Naive thymus-derived CD8-positive, alpha-beta T cell (primary cell): ENCODE measurements at regions of chr2 and their contacts with region 1.

Region 1: DNA sequence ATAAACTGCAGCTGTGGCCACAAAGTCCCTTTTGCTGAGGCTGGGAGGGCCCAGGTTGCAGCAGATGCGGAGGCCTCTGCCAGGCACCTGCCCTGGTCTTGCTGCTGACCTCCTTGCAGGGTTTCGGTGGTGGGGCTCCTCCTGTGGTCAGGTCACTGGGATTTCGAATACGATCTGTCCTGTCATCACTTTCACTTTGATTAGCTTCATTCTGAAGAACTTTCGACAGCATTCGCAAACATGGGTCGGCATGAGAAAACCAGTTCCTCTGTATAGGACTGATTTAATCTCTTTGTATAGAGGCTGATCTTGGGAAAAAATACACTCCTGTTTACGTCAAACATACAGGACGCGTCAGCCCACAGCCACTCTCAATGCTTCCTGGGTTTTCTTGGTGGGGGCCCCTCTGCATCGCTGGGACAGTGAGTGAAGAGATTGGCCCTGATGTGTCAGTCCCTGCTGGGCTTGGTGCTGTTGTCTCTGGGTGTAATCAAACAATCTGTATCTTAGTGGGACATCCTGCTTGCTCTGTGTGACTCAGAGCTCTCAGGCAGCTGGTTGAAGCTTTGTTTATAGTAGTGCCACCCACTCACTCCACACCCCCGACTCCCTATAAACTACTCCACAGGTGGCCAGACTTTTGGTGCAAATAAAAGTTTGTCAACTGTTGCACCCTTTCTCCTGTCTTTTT is 209.4 kb upstream of the CXCR4 start:
- DNase-seq: peak; percentile 48 to 90 (median 82)
- ATAC-seq: peak; percentile 92 to 94
- H3K4me3 Mint-ChIP-seq: peak overlapping the region; percentile 69 to 86 (median 82)
- H3K27ac Mint-ChIP-seq: peak overlapping the region; percentile 94 to 100 (median 97)
- H3K4me1 Mint-ChIP-seq: peaks cover 36 to 76% (median 68%) of the 10 kb centered on the region in 4 donors
- H3K27me3 Mint-ChIP-seq: no peaks in the 10 kb centered on the region

Region 2: GRCh38 chr2:136107051-136108033 is 220.0 kb before region 1 on chr2:
- POLR2A ChIA-PET with region 1: no interaction called
- DNase-seq: no peak
- ATAC-seq: no peak
- H3K4me3 Mint-ChIP-seq: no peak overlapping the region
- H3K27ac Mint-ChIP-seq: peak overlapping the region in 4 of 10 donors; percentile 2 to 61 (median 32)
- H3K4me1 Mint-ChIP-seq: peaks cover 7 to 59% (median 12%) of the 10 kb centered on the region in 4 donors
- H3K27me3 Mint-ChIP-seq: no peaks in the 10 kb centered on the region

Region 3: GRCh38 chr2:136281281-136282114 is 45.8 kb before region 1 on chr2:
- POLR2A ChIA-PET with region 1: interaction called, 11 read pairs
- DNase-seq: peak; percentile 28 to 76 (median 64)
- ATAC-seq: peak; percentile 87 to 88
- H3K4me3 Mint-ChIP-seq: peak overlapping the region; percentile 48 to 75 (median 60)
- H3K27ac Mint-ChIP-seq: peak overlapping the region; percentile 86 to 98 (median 95)
- H3K4me1 Mint-ChIP-seq: peaks cover 28 to 74% (median 56%) of the 10 kb centered on the region in 4 donors
- H3K27me3 Mint-ChIP-seq: no peaks in the 10 kb centered on the region

Region 4: GRCh38 chr2:136362676-136363390 is 35.5 kb after region 1 on chr2:
- POLR2A ChIA-PET with region 1: no interaction called
- DNase-seq: no peak
- ATAC-seq: peak in 1 of 2 donors; percentile 50
- H3K4me3 Mint-ChIP-seq: no peak overlapping the region
- H3K27ac Mint-ChIP-seq: peak overlapping the region in 2 of 10 donors; percentile 20 to 49
- H3K4me1 Mint-ChIP-seq: peaks cover 10 to 25% (median 20%) of the 10 kb centered on the region in 4 donors
- H3K27me3 Mint-ChIP-seq: no peaks in the 10 kb centered on the region

Region 5: GRCh38 chr2:136378712-136379595 is 51.6 kb after region 1 on chr2:
- POLR2A ChIA-PET with region 1: interaction called, 10 read pairs
- DNase-seq: peak; percentile 48 to 86 (median 76)
- ATAC-seq: peak; percentile 40 to 59
- H3K4me3 Mint-ChIP-seq: peak overlapping the region in 1 of 10 donors; percentile 18
- H3K27ac Mint-ChIP-seq: peak overlapping the region; percentile 5 to 91 (median 85)
- H3K4me1 Mint-ChIP-seq: peaks cover 42 to 79% (median 68%) of the 10 kb centered on the region in 4 donors
- H3K27me3 Mint-ChIP-seq: no peaks in the 10 kb centered on the region